Gastrocnemius medialis (tissue), 4 donors: ENCODE measurements at regions of chr1 and their contacts with region 1.

Region 1: GRCh38 chr1:10960411-10961299 is 51.8 kb upstream of the TARDBP start:
- DNase-seq: peak; percentile 72 to 90
- ATAC-seq: peak; percentile 76 to 79
- H3K4me3 ChIP-seq: peak overlapping the region; percentile 44 to 62 (median 52)
- H3K27ac ChIP-seq: peak overlapping the region; percentile 91 to 98 (median 92)
- H3K4me1 ChIP-seq: peaks cover 32 to 37% of the 10 kb centered on the region in 2 donors
- H3K27me3 ChIP-seq: no peaks in the 10 kb centered on the region
- CTCF ChIP-seq: peak; percentile 84 to 95 (median 93)
- POLR2A ChIP-seq: peak in 1 of 2 donors; percentile 24

Region 2: DNA sequence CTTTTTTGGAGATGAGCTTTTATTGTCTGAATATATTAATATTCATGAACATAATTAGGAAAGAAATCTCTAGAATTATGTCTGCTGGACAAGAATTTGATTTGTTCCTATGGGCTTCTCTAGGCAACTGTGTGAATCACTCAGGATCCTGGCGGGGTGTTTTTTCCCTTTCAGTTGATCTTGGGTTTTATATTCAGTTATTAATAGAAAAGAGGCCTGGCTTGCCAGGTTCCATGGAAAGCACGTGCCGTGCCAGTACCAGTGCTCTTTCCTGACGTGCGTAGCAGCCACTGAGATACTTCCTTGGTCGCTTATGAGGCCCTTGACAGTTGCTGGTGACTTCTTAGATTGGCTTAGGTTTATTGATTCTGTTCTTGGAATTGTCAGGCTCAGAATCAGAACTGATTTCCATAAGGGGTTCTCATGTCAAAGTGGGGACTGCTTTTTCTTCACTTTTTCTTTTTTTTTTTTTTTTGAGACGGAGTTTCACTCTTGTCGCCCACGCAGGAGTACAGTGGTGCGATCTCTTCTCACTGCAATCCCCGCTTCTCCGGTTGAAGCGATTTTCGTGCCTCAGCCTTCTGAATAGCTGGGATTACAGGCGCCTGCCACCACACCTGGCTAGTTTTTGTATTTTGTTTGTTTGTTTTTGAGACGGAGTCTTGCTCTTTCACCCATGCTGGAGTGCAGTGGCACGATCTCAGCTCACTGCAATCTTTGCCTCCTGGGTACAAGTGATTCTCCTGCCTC is 798.9 kb before region 1 on chr1:
- in situ Hi-C with region 1: no loop called
- intact Hi-C with region 1: loop called (anchors 5 kb)
- DNase-seq: peak; percentile 76 to 88
- ATAC-seq: peak; percentile 97 to 99
- H3K4me3 ChIP-seq: no peak overlapping the region
- H3K27ac ChIP-seq: peak overlapping the region; percentile 79 to 84 (median 83)
- H3K4me1 ChIP-seq: peaks cover 17 to 26% of the 10 kb centered on the region in 2 donors
- H3K27me3 ChIP-seq: no peaks in the 10 kb centered on the region
- CTCF ChIP-seq: no peak
- POLR2A ChIP-seq: peak in 1 of 2 donors; percentile 28